PC-3 (cell line): ENCODE measurements at regions of chr15 and their contacts with region 1.

Region 1: DNA sequence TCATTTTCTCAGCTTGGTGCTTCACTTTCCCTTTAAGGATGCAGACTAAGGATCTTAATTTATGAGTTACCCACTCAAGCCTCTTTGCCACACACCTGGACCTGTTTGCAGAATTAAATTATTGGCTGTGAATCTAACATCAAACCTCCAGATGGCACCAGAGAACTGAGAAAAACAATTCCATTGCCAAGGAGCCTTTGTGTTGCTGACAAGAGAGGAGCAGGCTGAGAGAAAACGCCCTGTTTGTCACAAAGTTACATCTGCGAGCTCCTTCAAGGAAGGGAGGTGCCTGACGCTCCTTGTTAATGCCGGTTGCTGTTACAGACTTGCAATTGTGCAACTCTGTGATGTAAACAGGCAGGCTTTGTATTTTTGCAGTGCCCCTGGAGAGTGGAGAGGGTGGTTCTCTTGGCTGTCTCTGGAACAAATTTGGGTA is 36.3 kb upstream of the TMC3 start:
- DNase-seq: peak; percentile 78
- ATAC-seq: peak; percentile 74
- H3K4me3 ChIP-seq: no peak overlapping the region
- H3K27ac ChIP-seq: no peak overlapping the region
- H3K4me1 ChIP-seq: no peaks in the 10 kb centered on the region
- H3K27me3 ChIP-seq: peaks cover 38% of the 10 kb centered on the region
- CTCF ChIP-seq: peak; percentile 72

Region 2: DNA sequence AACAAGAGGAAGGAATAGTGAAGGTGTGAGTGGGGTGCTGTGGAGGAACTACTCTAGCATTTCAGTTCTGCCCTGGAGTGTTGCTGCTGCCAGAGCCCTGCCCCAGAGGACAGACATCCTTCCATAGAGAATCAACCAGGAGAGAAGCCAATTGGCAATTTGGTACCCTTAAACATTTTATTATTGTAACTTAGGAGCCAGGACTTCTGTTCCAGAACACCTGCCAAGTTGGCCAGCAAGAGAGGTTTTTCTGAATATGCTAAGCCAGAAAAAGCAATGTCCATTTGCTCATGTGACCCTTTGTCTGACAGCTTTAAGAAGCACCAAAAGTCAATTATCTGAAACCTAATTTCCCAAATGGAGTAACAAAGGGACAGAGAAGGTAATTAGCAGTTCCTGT is 370.6 kb after region 1 on chr15:
- CTCF ChIA-PET with region 1: no interaction called
- POLR2A ChIA-PET with region 1: no interaction called
- intact Hi-C with region 1: no loop called
- DNase-seq: no peak
- ATAC-seq: no peak
- H3K4me3 ChIP-seq: no peak overlapping the region
- H3K27ac ChIP-seq: no peak overlapping the region
- H3K4me1 ChIP-seq: no peaks in the 10 kb centered on the region
- H3K27me3 ChIP-seq: peaks cover 47% of the 10 kb centered on the region
- CTCF ChIP-seq: no peak

Region 3: DNA sequence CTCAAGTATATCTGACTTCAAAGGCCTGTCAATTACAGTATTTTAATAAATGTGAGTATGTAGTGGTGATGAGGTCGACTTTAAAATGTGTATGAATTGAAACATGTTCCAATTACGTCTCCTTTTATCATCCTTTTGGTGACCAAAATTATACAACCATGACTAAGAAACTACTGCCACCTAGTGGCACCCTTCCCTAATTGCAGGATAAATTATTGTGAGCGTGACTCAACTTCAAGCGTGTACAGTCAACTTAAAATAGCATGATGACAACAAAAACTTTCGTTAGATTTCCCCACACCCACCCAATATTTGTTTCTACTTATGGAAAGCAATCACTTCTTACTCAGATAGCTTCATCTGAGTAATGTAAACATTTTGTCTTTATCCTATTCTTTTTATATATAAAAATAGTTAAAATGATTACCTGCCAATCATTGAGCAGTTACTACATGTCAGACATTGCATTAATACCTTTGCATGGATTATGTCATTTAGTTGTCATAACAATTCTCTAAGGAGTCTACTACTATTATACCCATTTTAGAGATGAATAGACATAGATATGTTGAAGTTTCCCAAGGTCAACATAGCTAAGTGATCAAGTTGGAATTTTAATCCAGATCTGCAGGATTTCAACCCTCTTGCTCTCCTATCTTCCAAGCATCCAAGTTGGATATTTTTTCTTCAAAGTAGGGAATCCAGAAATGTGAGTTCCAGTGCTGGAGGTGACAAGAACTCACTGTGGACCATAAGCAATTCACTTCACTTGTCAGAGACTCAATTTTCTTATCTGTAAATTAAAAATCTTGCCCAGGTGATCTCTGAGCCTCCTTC is 529.5 kb after region 1 on chr15:
- CTCF ChIA-PET with region 1: no interaction called
- POLR2A ChIA-PET with region 1: no interaction called
- intact Hi-C with region 1: loop called (anchors 1 kb)
- DNase-seq: peak; percentile 84
- ATAC-seq: 0 out of 2 replicates have a peak, but pooled peaks have one; percentile 27
- H3K4me3 ChIP-seq: no peak overlapping the region
- H3K27ac ChIP-seq: no peak overlapping the region
- H3K4me1 ChIP-seq: no peaks in the 10 kb centered on the region
- H3K27me3 ChIP-seq: peaks cover 5% of the 10 kb centered on the region; the same call in 1 of the 2 replicates
- CTCF ChIP-seq: peak; percentile 84

Region 4: DNA sequence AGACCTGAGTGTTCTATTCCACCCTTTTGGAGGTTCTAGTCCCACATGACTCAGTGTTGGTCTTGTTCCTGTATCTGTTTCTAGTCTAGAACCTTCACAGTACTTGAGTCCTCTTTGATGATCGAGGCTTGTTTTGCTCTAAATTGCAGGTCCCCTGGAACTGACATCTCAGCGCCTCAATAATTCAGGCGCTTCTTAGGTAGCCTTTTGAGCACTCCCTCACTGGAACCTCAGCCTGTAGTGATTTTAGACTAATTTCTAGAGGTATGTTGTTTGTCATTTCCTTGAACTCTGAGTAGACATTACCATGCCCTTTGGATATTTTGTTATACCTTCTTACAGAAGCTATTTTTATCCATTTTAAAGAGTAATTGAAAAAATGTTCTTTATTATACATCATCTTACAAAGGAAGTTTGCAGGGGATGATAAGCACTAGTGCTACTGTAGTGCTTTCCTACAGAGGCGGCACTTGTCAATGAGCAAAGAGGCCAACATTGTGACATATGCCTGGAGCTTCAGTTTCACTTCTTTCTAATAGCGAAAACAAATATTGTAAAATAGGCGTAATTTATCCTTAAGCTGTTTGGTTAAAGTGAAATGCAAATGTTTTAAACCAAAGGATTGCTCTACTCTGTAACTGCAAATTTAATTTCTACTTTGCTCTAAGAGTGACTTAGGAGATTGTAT is 776.5 kb after region 1 on chr15:
- CTCF ChIA-PET with region 1: no interaction called
- POLR2A ChIA-PET with region 1: no interaction called
- intact Hi-C with region 1: loop called (anchors 5 kb)
- DNase-seq: no peak
- ATAC-seq: no peak
- H3K4me3 ChIP-seq: no peak overlapping the region
- H3K27ac ChIP-seq: no peak overlapping the region
- H3K4me1 ChIP-seq: peaks cover 12% of the 10 kb centered on the region; the same call in 1 of the 2 replicates
- H3K27me3 ChIP-seq: no peaks in the 10 kb centered on the region
- CTCF ChIP-seq: no peak